Right ventricle myocardium inferior (tissue), 1 donor: ENCODE measurements at regions of chr5 and their contacts with region 1.

Region 1: DNA sequence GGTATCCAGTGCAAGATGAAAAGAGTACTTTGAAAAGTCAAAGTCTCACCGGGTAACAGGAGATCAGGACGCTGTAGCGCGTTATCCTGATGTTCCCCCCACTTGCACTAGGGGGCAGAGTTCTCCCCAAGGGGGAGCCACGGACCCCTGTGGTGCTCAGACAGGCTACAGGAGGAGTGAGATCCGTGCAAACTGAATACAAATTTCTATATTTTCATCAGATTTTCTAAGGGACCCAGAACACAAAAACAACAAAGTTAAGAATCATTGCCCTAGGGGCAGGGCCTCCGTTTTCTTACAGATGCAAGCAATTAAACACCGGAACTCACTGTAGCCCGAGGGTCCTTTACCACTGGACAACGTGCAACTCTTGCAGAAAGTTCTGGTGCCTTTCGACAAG is 2.0 kb downstream of the MYO10 start:
- DNase-seq: no peak
- ATAC-seq: no peak

Region 2: GRCh38 chr5:16791036-16791705 is 143.0 kb before region 1 on chr5:
- intact Hi-C with region 1: loop called (anchors 5 kb)
- DNase-seq: no peak
- ATAC-seq: no peak

Region 3: DNA sequence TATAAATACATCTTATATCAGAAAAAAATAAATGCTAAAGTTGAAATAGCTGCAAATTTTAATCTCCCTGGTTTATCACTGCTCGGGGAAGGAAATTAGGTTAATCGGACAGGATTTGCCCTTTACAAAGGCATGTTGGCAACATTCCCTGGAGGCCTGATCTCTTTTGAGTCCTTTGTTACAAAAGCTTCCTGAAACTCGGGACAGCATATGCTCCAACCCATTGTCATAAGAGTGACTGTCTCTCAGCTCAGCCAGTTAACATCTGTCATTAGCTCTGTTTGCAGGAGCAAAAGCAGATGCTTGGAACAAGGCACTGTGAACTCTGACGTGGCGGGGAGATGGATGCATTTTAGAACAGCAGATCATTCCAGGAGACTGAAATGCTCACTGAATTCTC is 78.6 kb before region 1 on chr5:
- intact Hi-C with region 1: no loop called
- DNase-seq: no peak
- ATAC-seq: peak; percentile 52

Region 4: GRCh38 chr5:17042041-17042440 is 107.9 kb after region 1 on chr5:
- intact Hi-C with region 1: loop called (anchors 10 kb)
- DNase-seq: no peak
- ATAC-seq: no peak

Region 5: GRCh38 chr5:17081142-17081541 is 147.0 kb after region 1 on chr5:
- intact Hi-C with region 1: loop called (anchors 2 kb)
- DNase-seq: no peak
- ATAC-seq: no peak

Region 6: GRCh38 chr5:17132444-17133083 is 198.4 kb after region 1 on chr5:
- intact Hi-C with region 1: loop called (anchors 2 kb)
- DNase-seq: no peak
- ATAC-seq: no peak

Region 7: GRCh38 chr5:17189381-17190036 is 255.4 kb after region 1 on chr5:
- intact Hi-C with region 1: loop called (anchors 1 kb)
- DNase-seq: peak; percentile 81
- ATAC-seq: peak; percentile 51